ENCODE measurements at regions of chr16 and their contacts with region 1.

Region 1: DNA sequence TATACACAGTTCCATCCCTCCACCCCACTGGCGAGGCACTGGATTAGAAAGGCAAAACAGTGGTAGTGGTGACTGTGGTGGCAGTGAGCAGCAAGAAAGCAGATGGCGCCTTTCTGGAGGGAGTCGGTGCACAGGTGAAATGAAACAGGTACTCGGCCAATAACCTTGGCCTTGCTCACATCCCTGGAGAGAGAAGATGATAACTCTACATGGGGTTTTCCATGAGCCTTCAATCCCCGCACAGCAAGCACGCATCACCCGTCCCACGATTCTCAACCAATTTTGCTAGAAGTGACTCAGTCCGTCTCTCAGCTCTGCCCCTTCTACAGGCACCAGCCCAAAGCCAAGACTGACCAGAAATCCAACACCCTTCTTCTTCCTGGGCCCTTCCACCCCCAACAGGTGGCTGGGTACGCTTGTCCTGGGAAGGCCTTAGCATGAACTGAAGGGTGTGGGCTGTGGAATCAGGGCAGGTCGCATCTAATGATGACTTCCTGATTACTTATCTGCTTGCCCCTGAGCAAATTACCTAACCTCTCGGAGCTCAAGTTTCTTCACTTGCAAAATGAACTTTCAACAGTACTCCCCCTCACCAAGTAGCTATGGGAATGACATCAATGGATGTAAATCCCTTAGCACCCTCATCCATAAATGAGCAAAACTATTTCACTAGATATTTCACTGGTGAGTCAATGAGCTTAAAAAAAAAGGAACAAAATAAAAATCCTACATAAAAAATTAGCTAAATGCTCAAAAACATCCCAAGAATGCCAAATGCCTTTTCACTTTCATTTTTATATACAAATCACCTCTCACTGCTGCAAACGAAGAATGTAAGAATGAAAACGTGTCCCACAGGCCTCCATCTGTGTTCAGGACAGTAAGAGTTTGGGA is 18.0 kb downstream of the XPO6 start:
- DNase-seq: peak in 6 of 35 experiments; percentile 11 to 65 (median 30)
- ATAC-seq: peak; percentile 34 to 50 (median 38)
- H3K4me3 ChIP-seq: peak overlapping the region; percentile 39 to 56
- H3K4me3 Mint-ChIP-seq: peak overlapping the region; percentile 62 to 75 (median 74)
- H3K27ac ChIP-seq: peak overlapping the region; percentile 86
- H3K27ac Mint-ChIP-seq: peak overlapping the region; percentile 96 to 98
- H3K4me1 ChIP-seq: peaks cover 53 to 59% of the 10 kb centered on the region in 2 experiments
- H3K4me1 Mint-ChIP-seq: peaks cover 79 to 86% (median 85%) of the 10 kb centered on the region in 3 donors
- H3K27me3 ChIP-seq: no peaks in the 10 kb centered on the region
- H3K27me3 Mint-ChIP-seq: no peaks in the 10 kb centered on the region

Region 2: GRCh38 chr16:28211712-28212534 is 18.1 kb after region 1 on chr16 and contains the start of gene XPO6:
- CTCF ChIA-PET with region 1: interaction called, 3 to 16 read pairs
- POLR2A ChIA-PET with region 1: interaction called, 8 to 10 read pairs
- DNase-seq: peak; percentile 91 to 99 (median 98)
- ATAC-seq: peak; percentile 84 to 90 (median 86)
- H3K4me3 ChIP-seq: peak within 1 kb of the TSS; percentile 89 to 93
- H3K4me3 Mint-ChIP-seq: peak within 1 kb of the TSS; percentile 78 to 90 (median 86)
- H3K27ac ChIP-seq: peak within 1 kb of the TSS; percentile 60
- H3K27ac Mint-ChIP-seq: peak within 1 kb of the TSS; percentile 89 to 91
- H3K4me1 ChIP-seq: peaks cover 24 to 39% of the 10 kb centered on the region in 2 experiments
- H3K4me1 Mint-ChIP-seq: peaks cover 29 to 40% (median 37%) of the 10 kb centered on the region in 3 donors
- H3K27me3 ChIP-seq: no peaks in the 10 kb centered on the region
- H3K27me3 Mint-ChIP-seq: no peaks in the 10 kb centered on the region
- total RNA-seq, gene XPO6: 355 to 403 (median 391) TPM

Region 3: DNA sequence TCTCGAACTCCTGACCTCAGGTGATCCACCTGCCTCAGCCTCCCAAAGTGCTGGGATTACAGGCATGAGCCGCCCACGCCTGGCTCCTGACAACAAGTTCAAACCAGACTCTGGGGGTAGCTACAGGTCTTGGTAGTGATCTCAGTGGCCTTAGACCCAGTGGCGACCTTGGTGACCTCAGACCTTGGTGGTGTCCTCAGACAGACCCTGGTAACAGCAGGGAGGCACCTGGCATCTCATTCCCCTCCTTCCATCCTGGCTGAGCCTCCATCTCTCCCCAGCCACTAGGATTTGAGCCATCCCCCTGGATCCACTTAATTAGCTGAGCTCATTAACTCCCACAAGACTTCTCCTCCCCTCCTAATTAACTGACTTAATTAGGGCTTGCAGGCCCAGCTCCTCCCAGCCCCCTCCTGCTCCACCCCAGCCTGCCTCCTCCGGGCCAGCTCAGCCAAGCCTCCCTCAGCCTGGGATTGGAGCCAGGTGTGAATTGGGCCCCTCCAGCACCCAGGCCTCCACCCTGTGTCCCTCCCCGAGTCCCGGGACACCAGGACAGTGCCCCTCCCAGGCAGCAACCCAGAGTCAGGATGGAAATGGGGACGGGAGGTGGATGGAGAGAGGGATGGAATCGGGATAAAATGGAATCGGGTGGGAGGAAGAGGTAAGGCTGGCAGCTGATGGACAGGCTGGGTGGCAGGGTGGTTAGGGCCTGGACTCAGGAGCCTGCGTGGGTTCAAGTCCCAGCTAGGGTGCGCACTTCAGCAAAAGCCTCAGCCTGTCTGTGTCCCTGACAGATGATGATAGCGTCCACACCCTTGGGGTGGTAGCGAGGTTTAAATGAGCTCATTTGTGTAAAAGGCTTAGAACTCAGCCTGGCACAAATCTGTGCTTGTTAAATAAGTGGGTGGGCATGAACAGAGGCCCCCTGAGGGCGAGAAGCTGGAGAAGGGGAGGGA is 87.4 kb after region 1 on chr16:
- CTCF ChIA-PET with region 1: no interaction called
- POLR2A ChIA-PET with region 1: no interaction called
- DNase-seq: no peak
- ATAC-seq: no peak
- H3K4me3 ChIP-seq: no peak overlapping the region
- H3K4me3 Mint-ChIP-seq: no peak overlapping the region
- H3K27ac ChIP-seq: no peak overlapping the region
- H3K27ac Mint-ChIP-seq: peak overlapping the region in 1 of 2 donors; percentile 18
- H3K4me1 ChIP-seq: peaks cover 21 to 39% of the 10 kb centered on the region in 2 experiments
- H3K4me1 Mint-ChIP-seq: peaks cover 30 to 31% (median 31%) of the 10 kb centered on the region in 3 donors
- H3K27me3 ChIP-seq: peaks cover 0 to 10% of the 10 kb centered on the region in 2 experiments
- H3K27me3 Mint-ChIP-seq: peaks cover 0 to 4% of the 10 kb centered on the region in 2 donors

Measured in T-cell (primary cell).